ENCODE measurements at regions of chr15 and their contacts with region 1.

Region 1: DNA sequence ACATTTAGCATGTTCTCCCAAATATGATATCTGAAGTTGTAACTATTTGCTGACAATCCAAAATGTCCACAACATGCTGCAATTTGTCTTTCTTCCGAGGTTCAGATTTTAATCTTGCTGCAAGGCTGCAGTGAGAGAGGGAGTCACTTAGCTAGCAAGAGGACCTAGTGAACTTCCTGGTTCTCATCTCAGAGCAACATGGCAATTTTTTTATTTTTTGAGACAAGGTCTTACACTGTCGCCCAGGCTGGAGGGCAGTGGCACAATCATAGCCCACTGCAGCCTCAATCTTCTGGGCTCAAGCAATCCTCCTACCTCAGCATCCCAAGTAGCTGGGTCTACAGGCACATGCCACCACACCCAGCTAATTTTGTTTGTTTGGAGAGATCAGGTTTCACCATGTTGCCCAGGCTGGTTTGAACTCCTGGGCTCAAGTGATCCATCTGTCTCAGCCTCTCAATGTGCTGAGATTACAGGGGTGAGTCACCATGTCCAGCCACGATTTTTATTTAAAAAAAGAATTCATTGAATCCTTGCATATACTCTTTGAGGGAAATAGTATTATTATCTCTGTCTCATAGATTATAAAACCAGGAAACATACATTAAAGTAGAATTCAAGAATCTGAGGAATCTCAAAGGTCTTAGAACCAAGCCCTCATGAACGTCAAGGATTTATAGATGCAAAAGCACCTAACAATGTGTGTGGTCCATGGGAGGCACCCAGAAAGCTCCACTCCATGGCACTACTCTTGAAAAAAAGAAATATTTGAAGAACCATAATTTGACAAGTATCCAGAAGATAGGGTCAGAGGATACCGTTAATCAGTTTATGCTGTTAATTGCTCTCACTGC is 9.1 kb downstream of the HDC start:
- DNase-seq: peak in 1 of 2 experiments; percentile 84
- ATAC-seq: peak in 1 of 2 experiments; percentile 85; a peak in 3 of 6 replicates
- H3K4me3 ChIP-seq: no peak overlapping the region
- H3K27ac ChIP-seq: peak overlapping the region; percentile 44 to 67; a peak in 4 of 6 replicates
- H3K4me1 ChIP-seq: peaks cover 35% of the 10 kb centered on the region
- CTCF ChIP-seq: no peak
- EP300 ChIP-seq: peak in 1 of 2 experiments; percentile 28; a peak in 1 of 5 replicates
- POLR2A ChIP-seq: no peak
- RAD21 ChIP-seq: no peak; a peak in 1 of 5 replicates

Region 2: GRCh38 chr15:50241684-50242450 is 14.5 kb before region 1 on chr15:
- CTCF ChIA-PET with region 1: interaction called, 13 read pairs
- POLR2A ChIA-PET with region 1: no interaction called
- DNase-seq: no peak
- ATAC-seq: peak in 1 of 2 experiments; percentile 66; a peak in 4 of 6 replicates
- H3K4me3 ChIP-seq: no peak overlapping the region
- H3K27ac ChIP-seq: no peak overlapping the region
- H3K4me1 ChIP-seq: peaks cover 6% of the 10 kb centered on the region; the same call in 1 of the 3 replicates
- CTCF ChIP-seq: no peak
- EP300 ChIP-seq: no peak
- POLR2A ChIP-seq: no peak
- RAD21 ChIP-seq: no peak

Region 3: DNA sequence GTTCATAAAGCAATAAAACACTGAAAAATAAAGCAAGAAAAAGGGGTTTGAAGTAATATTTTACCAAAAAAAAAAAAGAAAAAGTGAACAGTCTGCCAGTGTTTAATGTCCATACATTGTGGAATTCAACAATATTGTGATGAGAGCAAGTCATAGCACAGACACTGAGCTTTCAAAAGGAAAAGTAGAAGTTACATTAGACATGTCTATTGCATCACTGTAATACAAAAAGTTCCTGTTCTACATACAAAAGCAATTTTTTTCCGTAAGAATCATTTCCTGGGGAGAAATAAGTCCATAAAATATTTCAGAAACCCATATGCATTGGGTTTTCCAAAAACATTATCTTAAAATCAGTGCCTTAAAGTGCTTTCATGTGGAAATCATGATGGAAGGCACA is 21.0 kb after region 1 on chr15:
- CTCF ChIA-PET with region 1: no interaction called
- POLR2A ChIA-PET with region 1: no interaction called
- DNase-seq: no peak
- ATAC-seq: no peak
- H3K4me3 ChIP-seq: no peak overlapping the region
- H3K27ac ChIP-seq: no peak overlapping the region
- H3K4me1 ChIP-seq: no peaks in the 10 kb centered on the region
- CTCF ChIP-seq: no peak
- EP300 ChIP-seq: no peak
- POLR2A ChIP-seq: no peak
- RAD21 ChIP-seq: no peak

Measured in A549 (cell line).